SK-N-SH (cell line): ENCODE measurements at regions of chr11 and their contacts with region 1.

Region 1: GRCh38 chr11:74683279-74683871 is 47.9 kb downstream of the CHRDL2 start:
- DNase-seq: peak; percentile 87
- H3K4me3 ChIP-seq: peak overlapping the region in 1 of 2 experiments; percentile 28; a peak in 2 of 4 replicates
- H3K27ac ChIP-seq: no peak overlapping the region
- H3K4me1 ChIP-seq: peaks cover 0 to 5% of the 10 kb centered on the region in 2 experiments; a peak in 1 of 4 replicates
- H3K27me3 ChIP-seq: no peaks in the 10 kb centered on the region
- CTCF ChIP-seq: peak; percentile 34
- EP300 ChIP-seq: no peak
- RAD21 ChIP-seq: no peak

Region 2: GRCh38 chr11:74672956-74673692 is 10.3 kb before region 1 on chr11:
- CTCF ChIA-PET with region 1: interaction called, 15 read pairs
- POLR2A ChIA-PET with region 1: no interaction called
- DNase-seq: peak; percentile 77
- H3K4me3 ChIP-seq: no peak overlapping the region
- H3K27ac ChIP-seq: peak overlapping the region; percentile 56 to 99
- H3K4me1 ChIP-seq: peaks cover 15 to 16% of the 10 kb centered on the region in 2 experiments
- H3K27me3 ChIP-seq: no peaks in the 10 kb centered on the region
- CTCF ChIP-seq: no peak
- EP300 ChIP-seq: peak; percentile 44 to 84; a peak in 1 of 4 replicates
- RAD21 ChIP-seq: no peak

Region 3: DNA sequence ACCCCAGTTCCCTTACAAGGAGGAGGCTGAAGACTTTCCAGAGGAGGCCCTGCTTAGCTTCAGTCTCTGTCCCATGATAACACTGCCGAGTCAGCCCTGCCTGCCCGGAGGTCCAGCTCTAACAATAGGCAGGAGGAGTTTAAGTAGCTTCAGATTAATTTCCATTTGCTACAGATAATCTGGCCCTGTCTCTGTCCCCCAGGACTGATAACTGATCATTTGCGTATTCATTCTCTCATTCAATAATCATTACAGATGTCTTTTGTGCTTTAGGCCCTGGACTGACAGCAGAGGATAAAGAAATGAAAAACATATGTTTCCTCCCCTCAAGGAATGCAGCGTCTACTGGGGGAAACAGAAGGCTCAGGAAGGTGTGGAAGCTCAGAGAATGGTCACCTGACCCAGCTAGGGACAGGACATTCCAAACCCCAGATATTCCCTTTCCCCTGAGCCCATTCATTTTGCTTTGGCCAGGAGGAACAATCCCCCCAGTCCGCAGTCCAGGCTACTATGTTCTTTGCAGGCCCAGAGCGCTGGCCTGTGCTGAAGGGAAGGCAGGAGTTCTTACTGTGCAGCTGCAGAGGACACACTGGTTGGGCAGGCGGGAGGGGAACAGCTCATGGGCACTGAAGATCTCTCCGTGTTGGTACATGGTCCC is 27.0 kb after region 1 on chr11:
- CTCF ChIA-PET with region 1: interaction called, 10 read pairs
- POLR2A ChIA-PET with region 1: no interaction called
- DNase-seq: peak; percentile 72
- H3K4me3 ChIP-seq: no peak overlapping the region
- H3K27ac ChIP-seq: peak overlapping the region; percentile 54 to 68
- H3K4me1 ChIP-seq: peaks cover 9 to 19% of the 10 kb centered on the region in 2 experiments; a peak in 3 of 4 replicates
- H3K27me3 ChIP-seq: no peaks in the 10 kb centered on the region
- CTCF ChIP-seq: no peak
- EP300 ChIP-seq: peak in 1 of 2 experiments; percentile 87; a peak in 2 of 4 replicates
- RAD21 ChIP-seq: no peak